MCF 10A (cell line): ENCODE measurements at regions of chr3 and their contacts with region 1.

Region 1: DNA sequence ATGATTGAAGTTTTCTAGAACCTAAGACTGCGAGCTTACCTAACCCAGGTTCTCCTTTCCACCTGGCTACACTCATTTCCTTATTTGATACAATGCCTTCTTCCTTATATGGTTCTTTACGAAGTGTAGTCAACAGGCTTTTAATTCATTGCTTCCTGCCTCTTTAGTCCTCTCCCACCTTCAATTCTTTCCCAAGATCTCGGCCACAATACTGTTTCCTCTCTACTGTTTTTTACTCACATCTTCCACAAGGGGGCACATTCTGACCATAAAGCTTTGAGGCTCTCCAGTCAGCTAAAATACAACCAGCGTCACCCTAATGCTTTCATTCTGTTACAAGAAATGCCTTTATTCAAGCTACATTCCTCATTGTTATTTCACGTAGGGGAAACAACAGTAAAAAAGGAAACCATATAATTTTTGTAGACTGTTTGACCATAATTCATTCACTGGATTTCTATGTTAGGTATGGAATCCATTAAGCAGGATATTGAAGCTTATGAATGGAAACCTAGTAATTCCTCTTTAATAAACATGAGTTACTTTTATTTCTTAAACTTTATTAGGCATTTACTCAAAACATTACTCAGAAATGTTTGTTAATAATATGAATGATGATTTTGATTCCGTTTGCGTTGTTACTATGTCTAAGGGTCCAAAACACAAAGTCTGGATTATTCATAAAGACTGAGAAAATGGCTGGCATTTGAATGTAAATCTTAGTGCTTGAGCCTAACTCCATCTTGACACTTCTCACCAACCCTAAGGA is 29.5 kb upstream of the VEPH1 start:
- DNase-seq: peak; percentile 89
- H3K4me3 Mint-ChIP-seq: no peak overlapping the region
- H3K27ac Mint-ChIP-seq: no peak overlapping the region
- H3K4me1 Mint-ChIP-seq: no peaks in the 10 kb centered on the region
- H3K27me3 Mint-ChIP-seq: no peaks in the 10 kb centered on the region
- CTCF ChIP-seq: peak; percentile 66

Region 2: GRCh38 chr3:156811089-156811862 is 721.4 kb before region 1 on chr3:
- CTCF ChIA-PET with region 1: no interaction called
- POLR2A ChIA-PET with region 1: no interaction called
- intact Hi-C with region 1: no loop called
- DNase-seq: peak; percentile 22
- H3K4me3 Mint-ChIP-seq: no peak overlapping the region
- H3K27ac Mint-ChIP-seq: peak overlapping the region; percentile 70
- H3K4me1 Mint-ChIP-seq: peaks cover 36% of the 10 kb centered on the region
- H3K27me3 Mint-ChIP-seq: no peaks in the 10 kb centered on the region
- CTCF ChIP-seq: no peak

Region 3: DNA sequence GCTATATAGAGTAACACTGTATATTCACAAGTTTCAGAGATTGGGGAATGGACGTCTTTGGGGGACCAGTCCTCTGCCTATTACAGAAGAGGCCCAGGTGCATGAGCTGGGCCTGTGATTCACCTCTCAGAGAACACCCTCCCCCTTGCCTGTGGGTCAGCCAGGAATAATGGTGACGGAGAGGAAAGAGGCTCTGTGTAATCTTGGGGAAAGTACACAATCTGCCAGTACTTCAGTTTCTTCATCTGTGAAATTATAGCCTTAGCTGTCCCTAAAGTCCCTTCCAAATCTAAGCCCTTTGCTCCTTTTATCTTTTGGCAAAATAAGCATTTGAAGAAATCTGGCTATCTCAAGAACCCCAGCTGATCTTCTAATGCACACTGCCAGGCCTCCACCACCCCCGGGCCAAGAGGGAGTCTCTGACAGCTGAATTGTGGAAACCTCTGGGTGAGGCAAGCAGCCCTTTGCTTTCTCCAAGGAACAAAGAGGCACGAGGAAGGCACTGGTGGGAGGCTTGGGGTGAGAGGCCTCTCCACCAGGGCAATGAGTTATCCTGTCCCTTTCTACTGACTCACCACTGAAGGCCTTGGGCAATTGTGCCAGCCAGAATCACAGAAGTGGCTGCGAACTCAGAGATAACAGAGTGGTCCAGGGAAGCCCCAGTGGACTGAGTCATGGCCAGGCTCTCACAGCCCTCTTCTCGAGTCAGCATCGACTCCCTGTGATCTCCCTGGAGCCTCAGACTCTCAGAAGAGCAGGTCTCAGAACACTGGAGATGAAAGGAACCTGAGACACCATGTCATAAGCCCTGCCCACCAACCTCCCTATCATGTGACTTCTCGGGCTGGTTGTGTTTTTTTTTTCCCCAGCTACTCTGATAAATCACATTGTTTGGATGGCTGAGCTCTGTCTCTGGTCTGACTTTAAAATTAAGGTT is 404.6 kb before region 1 on chr3:
- CTCF ChIA-PET with region 1: no interaction called
- POLR2A ChIA-PET with region 1: no interaction called
- intact Hi-C with region 1: no loop called
- DNase-seq: peak; percentile 91
- H3K4me3 Mint-ChIP-seq: peak overlapping the region; percentile 60
- H3K27ac Mint-ChIP-seq: peak overlapping the region; percentile 96
- H3K4me1 Mint-ChIP-seq: peaks cover 67% of the 10 kb centered on the region
- H3K27me3 Mint-ChIP-seq: no peaks in the 10 kb centered on the region
- CTCF ChIP-seq: no peak

Region 4: DNA sequence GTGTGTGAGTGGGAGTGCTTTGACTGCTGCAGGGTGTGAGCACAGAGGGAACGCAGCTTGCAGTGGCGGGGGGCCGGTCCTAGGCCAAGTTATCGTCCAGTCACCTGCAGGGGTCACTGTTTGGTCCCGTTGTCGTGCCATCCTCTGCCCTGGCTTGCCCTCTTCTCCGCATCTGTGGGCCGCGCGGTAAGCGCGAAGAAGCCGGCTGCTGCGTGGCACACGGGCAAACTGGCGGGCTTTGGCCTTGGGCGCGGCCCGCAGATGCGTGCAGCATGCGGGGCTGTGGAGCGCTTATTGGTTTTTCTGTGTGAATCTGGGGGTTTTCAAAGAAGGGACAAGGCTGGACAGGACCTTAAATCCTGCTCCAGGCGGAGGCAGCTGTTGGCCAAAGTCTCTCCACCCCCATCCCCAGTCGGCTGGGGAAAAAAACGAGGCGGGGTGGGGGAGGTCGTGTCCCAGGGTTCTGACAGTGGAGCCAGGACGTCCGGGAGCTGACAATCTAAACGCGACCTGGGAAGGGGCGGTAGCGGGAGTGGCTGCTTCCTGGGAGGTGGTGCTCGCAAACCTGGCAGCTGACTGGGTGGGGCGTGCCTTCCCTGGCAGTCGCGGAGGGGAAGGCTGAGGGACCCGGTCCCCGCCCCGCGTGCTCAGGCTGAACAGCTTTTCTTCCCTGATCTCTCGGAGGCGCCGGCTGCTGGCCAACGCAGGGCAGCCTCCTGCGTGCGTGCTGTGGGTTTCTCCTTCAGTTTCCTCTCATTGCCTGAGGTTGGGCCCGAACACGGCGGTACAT is 10.2 kb after region 1 on chr3:
- CTCF ChIA-PET with region 1: interaction called, 25 read pairs
- POLR2A ChIA-PET with region 1: no interaction called
- intact Hi-C with region 1: no loop called
- DNase-seq: peak; percentile 32
- H3K4me3 Mint-ChIP-seq: peak overlapping the region; percentile 44
- H3K27ac Mint-ChIP-seq: no peak overlapping the region
- H3K4me1 Mint-ChIP-seq: peaks cover 5% of the 10 kb centered on the region
- H3K27me3 Mint-ChIP-seq: peaks cover 5% of the 10 kb centered on the region
- CTCF ChIP-seq: no peak

Region 5: DNA sequence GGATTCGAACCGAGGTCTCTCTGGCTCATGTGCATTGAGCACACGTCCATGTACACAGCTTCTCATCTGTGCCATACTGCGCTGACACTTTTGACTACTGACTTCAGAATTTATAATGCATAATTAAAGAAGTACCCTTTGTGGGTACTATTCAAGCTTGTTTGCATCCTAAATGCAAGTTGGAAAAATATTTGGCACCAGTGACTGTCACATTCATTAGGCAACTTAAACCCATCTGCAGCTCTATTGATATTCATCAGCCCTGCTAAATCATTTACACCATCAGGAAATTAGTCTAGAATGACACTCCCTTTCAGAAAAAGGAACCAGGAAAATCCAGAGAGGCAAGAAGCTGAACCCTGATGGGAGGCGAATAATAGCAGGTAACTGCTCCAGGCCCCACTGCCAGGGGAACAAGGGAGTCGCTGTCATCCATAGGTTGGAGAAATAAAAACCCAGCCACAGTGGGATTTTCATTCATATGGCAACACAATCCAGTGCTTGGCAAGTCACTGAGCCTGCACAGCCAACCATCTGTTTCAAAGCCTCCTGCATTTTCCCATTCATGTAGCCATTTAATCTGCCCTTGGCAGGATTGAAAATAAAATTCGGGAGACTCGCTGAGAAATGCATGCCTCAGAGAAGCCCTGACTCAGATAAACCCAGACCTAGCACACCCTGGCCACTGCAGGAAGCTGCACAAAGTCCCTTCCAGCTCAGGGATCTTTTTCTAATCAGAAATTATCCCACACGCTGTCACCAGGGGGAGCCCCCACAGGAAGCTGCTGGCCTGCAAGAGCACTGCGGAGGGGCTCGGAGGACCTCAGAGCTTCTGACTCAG is 73.5 kb after region 1 on chr3:
- CTCF ChIA-PET with region 1: interaction called, 67 read pairs
- POLR2A ChIA-PET with region 1: no interaction called
- intact Hi-C with region 1: no loop called
- DNase-seq: peak; percentile 65
- H3K4me3 Mint-ChIP-seq: no peak overlapping the region
- H3K27ac Mint-ChIP-seq: no peak overlapping the region
- H3K4me1 Mint-ChIP-seq: no peaks in the 10 kb centered on the region
- H3K27me3 Mint-ChIP-seq: no peaks in the 10 kb centered on the region
- CTCF ChIP-seq: peak; percentile 83

Region 6: DNA sequence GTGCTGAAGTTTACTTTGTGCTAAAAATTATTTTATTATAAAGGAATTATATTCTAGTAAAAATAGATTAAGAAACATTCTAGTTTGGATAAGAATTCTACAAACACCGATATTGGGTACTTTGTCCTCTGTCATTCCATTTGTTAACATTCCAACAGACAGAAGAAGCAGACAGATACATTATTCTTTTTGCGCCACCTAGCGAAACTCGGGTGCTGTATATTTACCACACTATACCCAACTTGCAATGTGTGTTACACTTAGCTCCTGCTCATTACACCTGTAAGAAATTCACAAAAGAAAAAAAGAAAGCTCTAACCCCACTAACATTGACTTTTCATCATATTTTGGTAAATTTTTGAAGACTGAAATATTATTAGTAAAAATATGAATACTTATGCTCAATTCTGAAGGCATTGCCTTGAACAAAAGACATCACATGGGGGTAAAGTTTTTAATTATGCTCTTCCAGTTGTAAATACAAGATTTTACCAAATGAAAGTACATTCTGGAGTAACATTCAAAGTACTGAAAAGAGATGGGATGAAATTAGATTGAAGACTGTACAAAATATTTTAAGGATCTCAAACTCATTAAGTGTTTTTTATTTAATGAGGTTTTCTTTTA is 901.8 kb after region 1 on chr3:
- CTCF ChIA-PET with region 1: interaction called, 16 read pairs
- POLR2A ChIA-PET with region 1: no interaction called
- intact Hi-C with region 1: loop called (anchors 1 kb)
- DNase-seq: peak; percentile 79
- H3K4me3 Mint-ChIP-seq: no peak overlapping the region
- H3K27ac Mint-ChIP-seq: no peak overlapping the region
- H3K4me1 Mint-ChIP-seq: no peaks in the 10 kb centered on the region
- H3K27me3 Mint-ChIP-seq: no peaks in the 10 kb centered on the region
- CTCF ChIP-seq: peak; percentile 69

Region 7: GRCh38 chr3:158644345-158644908 is 1111.7 kb after region 1 on chr3 and contains the start of gene GFM1:
- CTCF ChIA-PET with region 1: interaction called, 4 read pairs
- POLR2A ChIA-PET with region 1: interaction called, 3 read pairs
- intact Hi-C with region 1: loop called (anchors 2 kb)
- DNase-seq: peak; percentile 96
- H3K4me3 Mint-ChIP-seq: peak within 1 kb of the TSS; percentile 93
- H3K27ac Mint-ChIP-seq: peak within 1 kb of the TSS; percentile 94
- H3K4me1 Mint-ChIP-seq: peaks cover 12% of the 10 kb centered on the region
- H3K27me3 Mint-ChIP-seq: no peaks in the 10 kb centered on the region
- CTCF ChIP-seq: peak; percentile 81
- total RNA-seq, gene GFM1: 53.9 and 54.1 TPM in 2 replicates